HEK293T (cell line): ENCODE measurements at regions of chr2 and their contacts with region 1.

Region 1: DNA sequence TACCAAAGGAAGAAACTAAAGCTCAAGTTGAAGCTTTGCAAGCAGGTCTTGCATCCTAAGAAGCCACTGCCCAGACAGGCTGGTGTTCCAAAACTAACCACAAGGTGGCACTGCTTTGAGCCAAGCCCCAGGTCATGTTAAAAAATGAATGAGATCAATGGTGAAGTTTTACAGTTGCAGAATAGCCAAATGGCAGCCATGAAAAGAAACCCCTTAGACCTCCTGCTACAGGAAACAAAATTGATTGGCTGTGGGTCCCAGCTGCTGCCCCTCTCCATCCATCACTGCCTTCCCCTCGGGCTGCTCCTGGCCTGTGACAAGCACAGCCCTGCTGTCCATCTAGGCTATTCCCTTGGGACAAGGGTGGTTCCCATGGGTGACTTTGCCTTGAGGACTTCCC is 20.7 kb upstream of the MREG start:
- DNase-seq: peak; percentile 76

Region 2: GRCh38 chr2:215764441-215765048 is 269.5 kb before region 1 on chr2:
- CTCF ChIA-PET with region 1: no interaction called
- POLR2A ChIA-PET with region 1: no interaction called
- DNase-seq: no peak

Region 3: DNA sequence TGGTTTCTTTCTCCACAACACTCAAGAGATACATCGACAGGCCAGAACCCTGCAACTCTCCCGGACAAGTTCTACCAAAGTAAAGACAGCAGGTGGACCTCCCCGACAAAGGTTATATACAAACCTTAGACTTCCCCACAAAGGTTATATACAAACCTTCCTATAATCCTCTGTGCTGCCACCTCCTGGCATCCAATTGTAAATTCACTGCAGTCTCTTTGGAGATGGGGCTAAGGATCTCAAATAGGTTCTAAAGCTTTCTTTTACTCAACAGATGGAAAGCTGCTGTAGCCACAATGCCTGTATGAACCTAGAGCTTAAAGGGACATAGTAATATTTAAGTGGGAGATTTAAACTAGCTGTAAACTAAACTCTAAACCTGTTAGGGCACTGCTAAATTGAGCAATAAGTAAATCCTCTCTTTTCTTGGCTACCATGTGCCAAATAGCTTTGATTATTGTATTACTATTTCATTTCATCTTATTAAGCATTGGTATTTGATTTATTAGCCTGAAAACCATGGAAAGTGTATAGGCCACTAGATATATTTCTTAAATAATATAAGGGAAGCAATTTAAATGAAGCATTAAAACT is 10.9 kb before region 1 on chr2:
- CTCF ChIA-PET with region 1: interaction called, 27 read pairs
- POLR2A ChIA-PET with region 1: no interaction called
- DNase-seq: peak; percentile 61